Left cardiac atrium (tissue), 4 donors: ENCODE measurements at regions of chr2 and their contacts with region 1.

Region 1: GRCh38 chr2:18749912-18750526 is 160.7 kb upstream of the NT5C1B start:
- DNase-seq: peak; percentile 47
- ATAC-seq: peak in 1 of 2 donors; percentile 60

Region 2: GRCh38 chr2:19746611-19747309 is 996.7 kb after region 1 on chr2:
- intact Hi-C with region 1: loop called in 1 of 2 experiments (anchors 10 kb)
- DNase-seq: no peak
- ATAC-seq: peak; percentile 55 to 71